ENCODE measurements at regions of chr6 and their contacts with region 1.

Region 1: DNA sequence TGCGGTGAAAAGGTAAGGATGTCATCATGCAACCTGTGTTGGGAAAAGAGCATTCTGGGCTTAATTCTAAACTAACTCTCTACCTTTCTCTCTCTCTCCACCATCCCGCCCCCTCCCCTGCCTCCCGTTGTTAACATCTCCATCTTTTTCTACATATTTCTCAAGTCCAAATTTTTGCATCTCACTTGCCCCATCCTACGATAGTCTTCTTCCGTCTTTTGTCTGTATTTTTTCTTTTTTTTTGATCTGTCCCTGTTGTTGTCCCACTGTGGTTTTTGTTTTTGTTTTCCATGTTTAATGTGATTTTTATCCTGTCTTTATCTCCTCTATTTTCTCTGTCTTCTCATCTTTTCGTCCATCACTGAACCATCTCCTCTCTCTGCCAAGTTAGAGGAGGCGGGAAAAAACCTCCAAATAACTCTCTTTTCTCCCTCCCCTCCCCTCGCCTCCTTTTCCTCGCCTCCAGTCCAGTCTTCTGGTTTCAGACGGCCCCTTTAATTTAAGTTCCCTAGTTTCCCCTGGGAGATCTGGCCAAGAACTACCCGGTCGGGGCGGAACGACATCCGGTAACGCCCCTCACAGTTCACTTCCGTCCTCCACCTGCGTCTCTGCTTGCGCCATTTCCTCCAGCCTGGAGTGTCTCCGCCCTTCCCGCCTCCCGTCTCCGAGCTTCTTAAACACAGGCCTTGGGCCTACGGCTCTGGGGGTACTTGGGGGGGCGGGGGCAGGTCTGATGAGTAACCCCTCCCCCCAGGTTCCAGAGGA is at the start of gene NFKBIL1:
- DNase-seq: peak; percentile 85
- ATAC-seq: peak; percentile 82
- H3K4me3 Mint-ChIP-seq: peak within 1 kb of the TSS; percentile 93
- H3K27ac Mint-ChIP-seq: peak within 1 kb of the TSS; percentile 97
- H3K4me1 Mint-ChIP-seq: peaks cover 53% of the 10 kb centered on the region
- H3K27me3 Mint-ChIP-seq: no peaks in the 10 kb centered on the region
- CTCF ChIP-seq: no peak
- total RNA-seq, gene NFKBIL1: 11.7 and 16.7 TPM in 2 replicates

Region 2: GRCh38 chr6:31493875-31494694 is 53.1 kb before region 1 on chr6:
- CTCF ChIA-PET with region 1: interaction called, 4 read pairs
- POLR2A ChIA-PET with region 1: interaction called, 46 read pairs
- intact Hi-C with region 1: loop called (anchors 1 kb)
- DNase-seq: peak; percentile 76
- ATAC-seq: peak; percentile 48
- H3K4me3 Mint-ChIP-seq: peak overlapping the region; percentile 90
- H3K27ac Mint-ChIP-seq: peak overlapping the region; percentile 92
- H3K4me1 Mint-ChIP-seq: peaks cover 54% of the 10 kb centered on the region
- H3K27me3 Mint-ChIP-seq: no peaks in the 10 kb centered on the region
- CTCF ChIP-seq: no peak

Region 3: GRCh38 chr6:31575335-31575901 is 28.3 kb after region 1 on chr6 and contains the start of gene TNF:
- CTCF ChIA-PET with region 1: interaction called, 611 read pairs
- POLR2A ChIA-PET with region 1: interaction called, 234 read pairs
- intact Hi-C with region 1: loop called (anchors 1 kb)
- DNase-seq: peak; percentile 66
- ATAC-seq: peak; percentile 51
- H3K4me3 Mint-ChIP-seq: peak within 1 kb of the TSS; percentile 98
- H3K27ac Mint-ChIP-seq: peak within 1 kb of the TSS; percentile 99
- H3K4me1 Mint-ChIP-seq: peaks cover 95% of the 10 kb centered on the region
- H3K27me3 Mint-ChIP-seq: no peaks in the 10 kb centered on the region
- CTCF ChIP-seq: no peak
- total RNA-seq, gene TNF: 135 and 139 TPM in 2 replicates

Region 4: GRCh38 chr6:31619805-31620585 is 72.9 kb after region 1 on chr6:
- CTCF ChIA-PET with region 1: interaction called, 6 read pairs
- POLR2A ChIA-PET with region 1: interaction called, 20 read pairs
- intact Hi-C with region 1: loop called (anchors 1 kb)
- DNase-seq: peak; percentile 87
- ATAC-seq: peak; percentile 84
- H3K4me3 Mint-ChIP-seq: peak overlapping the region; percentile 86
- H3K27ac Mint-ChIP-seq: peak overlapping the region; percentile 94
- H3K4me1 Mint-ChIP-seq: peaks cover 46% of the 10 kb centered on the region
- H3K27me3 Mint-ChIP-seq: no peaks in the 10 kb centered on the region
- CTCF ChIP-seq: no peak

Region 5: GRCh38 chr6:31680840-31681671 is 133.9 kb after region 1 on chr6 and contains the start of gene LY6G5C:
- CTCF ChIA-PET with region 1: no interaction called
- POLR2A ChIA-PET with region 1: interaction called, 3 read pairs
- intact Hi-C with region 1: loop called (anchors 1 kb)
- DNase-seq: peak; percentile 46
- ATAC-seq: peak; percentile 75
- H3K4me3 Mint-ChIP-seq: peak within 1 kb of the TSS; percentile 84
- H3K27ac Mint-ChIP-seq: peak within 1 kb of the TSS; percentile 72
- H3K4me1 Mint-ChIP-seq: peaks cover 40% of the 10 kb centered on the region
- H3K27me3 Mint-ChIP-seq: no peaks in the 10 kb centered on the region
- CTCF ChIP-seq: no peak
- total RNA-seq, gene LY6G5C: 0.29 and 0.73 TPM in 2 replicates

Region 6: DNA sequence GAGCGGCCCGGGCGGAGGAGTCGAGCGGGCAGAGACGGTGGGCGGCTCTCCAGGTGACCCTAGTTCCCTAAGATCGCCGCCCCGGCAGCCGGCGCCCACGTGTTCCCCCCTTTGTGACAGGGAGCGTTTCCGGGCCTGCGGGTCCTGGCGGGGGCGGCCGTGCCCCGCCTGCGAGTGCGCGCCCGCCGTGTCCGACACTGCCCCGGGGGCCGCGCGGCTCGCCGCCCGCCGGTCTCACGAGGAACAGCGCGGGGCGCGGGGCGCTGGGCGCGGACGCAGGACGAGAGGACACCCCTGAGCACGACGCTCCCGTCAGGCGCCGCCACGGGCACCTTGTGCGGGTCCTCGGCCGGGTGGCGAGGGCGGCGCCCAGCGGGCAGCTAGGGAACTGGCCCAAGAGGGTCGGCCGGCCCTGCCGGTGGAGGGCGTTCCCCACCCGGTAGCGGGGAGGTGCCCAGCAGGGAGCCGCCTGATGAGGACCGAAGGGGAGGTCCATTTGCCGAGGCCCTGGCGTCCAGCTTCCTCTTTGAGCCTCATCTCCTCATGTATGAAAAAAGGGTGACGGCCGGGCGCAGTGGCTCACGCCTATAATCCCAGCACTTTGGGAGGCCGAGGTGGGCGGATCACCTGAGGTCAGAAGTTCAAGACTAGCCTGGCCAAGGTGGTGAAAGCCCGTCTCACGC is 248.6 kb after region 1 on chr6 and contains the start of gene VARS1:
- CTCF ChIA-PET with region 1: interaction called, 3 read pairs
- POLR2A ChIA-PET with region 1: interaction called, 4 read pairs
- intact Hi-C with region 1: loop called (anchors 1 kb)
- DNase-seq: peak; percentile 89
- ATAC-seq: peak; percentile 89
- H3K4me3 Mint-ChIP-seq: peak within 1 kb of the TSS; percentile 98
- H3K27ac Mint-ChIP-seq: peak within 1 kb of the TSS; percentile 98
- H3K4me1 Mint-ChIP-seq: peaks cover 65% of the 10 kb centered on the region
- H3K27me3 Mint-ChIP-seq: no peaks in the 10 kb centered on the region
- CTCF ChIP-seq: no peak
- total RNA-seq, gene VARS1: 136 and 140 TPM in 2 replicates

Region 7: DNA sequence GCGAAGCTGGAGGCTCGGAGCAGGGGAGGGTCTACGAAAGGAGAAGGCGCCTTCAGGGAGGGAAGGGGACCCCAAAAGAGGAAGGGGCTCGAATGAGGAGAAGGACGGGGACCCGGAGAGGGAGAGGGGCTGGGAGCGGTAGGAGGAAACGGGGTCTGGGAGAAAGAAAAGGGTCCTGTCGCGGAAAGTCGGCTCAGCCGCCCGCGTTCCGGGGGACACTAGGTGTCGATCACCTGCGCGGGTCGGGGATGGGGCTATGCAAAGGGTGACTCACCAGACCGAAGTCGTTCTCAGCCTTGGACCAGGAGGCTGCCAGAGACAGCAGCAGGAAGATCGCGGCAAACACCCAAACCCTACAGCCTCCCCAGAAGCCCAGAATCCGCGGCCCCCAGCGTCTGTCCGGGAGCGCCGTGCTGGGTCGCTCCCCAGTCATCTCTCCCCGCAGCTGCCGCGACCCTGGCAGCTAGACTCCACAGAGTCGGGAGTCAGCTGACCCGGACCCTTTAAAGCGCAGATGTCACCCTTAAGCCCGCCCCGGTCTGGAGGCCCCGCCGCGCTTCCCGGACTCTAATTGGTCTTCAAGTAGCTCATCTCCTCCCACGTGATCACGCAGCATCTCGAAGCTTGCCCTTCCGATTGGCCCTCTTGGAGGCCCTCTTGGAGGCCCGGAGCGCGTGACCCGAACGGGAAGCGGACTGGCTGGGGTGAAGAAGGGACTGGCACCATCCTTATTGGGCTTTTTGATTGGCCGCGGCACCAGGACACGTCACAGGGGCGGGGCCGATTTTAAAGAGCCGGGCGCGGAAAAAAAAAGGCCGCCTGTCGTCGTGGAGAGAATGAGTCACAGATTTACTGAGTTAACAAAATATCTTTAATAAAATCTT is 315.4 kb after region 1 on chr6 and contains the start of gene NEU1:
- CTCF ChIA-PET with region 1: interaction called, 4 read pairs
- POLR2A ChIA-PET with region 1: interaction called, 8 read pairs
- intact Hi-C with region 1: loop called (anchors 1 kb)
- DNase-seq: peak; percentile 93
- ATAC-seq: peak; percentile 91
- H3K4me3 Mint-ChIP-seq: peak within 1 kb of the TSS; percentile 95
- H3K27ac Mint-ChIP-seq: peak within 1 kb of the TSS; percentile 93
- H3K4me1 Mint-ChIP-seq: peaks cover 21% of the 10 kb centered on the region
- H3K27me3 Mint-ChIP-seq: no peaks in the 10 kb centered on the region
- CTCF ChIP-seq: no peak
- total RNA-seq, gene NEU1: 18.3 and 19.2 TPM in 2 replicates

Measured in activated B cell treated with CpG ODN at 0.5 μM for 24 hours (primary cell).